Heart left ventricle (tissue), 16 donors: ENCODE measurements at regions of chr7 and their contacts with region 1.

Region 1: GRCh38 chr7:93890464-93891068 is at the start of gene TFPI2:
- DNase-seq: peak; percentile 25 to 59 (median 43)
- ATAC-seq: peak in 3 of 4 donors; percentile 61 to 69 (median 65)
- H3K4me3 ChIP-seq: peak within 1 kb of the TSS; percentile 50 to 72 (median 62)
- H3K27ac ChIP-seq: peak within 1 kb of the TSS in 7 of 12 donors; percentile 14 to 67 (median 36)
- H3K4me1 ChIP-seq: peaks cover 0 to 24% (median 8%) of the 10 kb centered on the region in 12 donors
- H3K27me3 ChIP-seq: peaks cover 0 to 32% (median 9%) of the 10 kb centered on the region in 9 donors
- CTCF ChIP-seq: peak in 1 of 12 donors; percentile 19
- POLR2A ChIP-seq: peak in 1 of 2 donors; percentile 35
- total RNA-seq, gene TFPI2: 0.92 to 26.8 (median 1.9) TPM

Region 2: GRCh38 chr7:93843260-93843659 is 47.3 kb before region 1 on chr7:
- intact Hi-C with region 1: no loop called
- DNase-seq: no peak
- ATAC-seq: no peak
- H3K4me3 ChIP-seq: no peak overlapping the region
- H3K27ac ChIP-seq: no peak overlapping the region
- H3K4me1 ChIP-seq: no peaks in the 10 kb centered on the region
- H3K27me3 ChIP-seq: no peaks in the 10 kb centered on the region
- CTCF ChIP-seq: no peak
- POLR2A ChIP-seq: no peak

Region 3: GRCh38 chr7:94129443-94130140 is 239.0 kb after region 1 on chr7:
- intact Hi-C with region 1: no loop called
- DNase-seq: no peak
- ATAC-seq: peak in 2 of 4 donors; percentile 41 to 74
- H3K4me3 ChIP-seq: no peak overlapping the region
- H3K27ac ChIP-seq: no peak overlapping the region
- H3K4me1 ChIP-seq: peaks cover 0 to 3% (median 0%) of the 10 kb centered on the region in 12 donors
- H3K27me3 ChIP-seq: no peaks in the 10 kb centered on the region
- CTCF ChIP-seq: no peak
- POLR2A ChIP-seq: no peak

Region 4: GRCh38 chr7:94170836-94171235 is 280.3 kb after region 1 on chr7:
- intact Hi-C with region 1: no loop called
- DNase-seq: no peak
- ATAC-seq: no peak
- H3K4me3 ChIP-seq: no peak overlapping the region
- H3K27ac ChIP-seq: peak overlapping the region in 2 of 12 donors; percentile 6 to 21
- H3K4me1 ChIP-seq: peaks cover 0 to 20% (median 0%) of the 10 kb centered on the region in 12 donors
- H3K27me3 ChIP-seq: no peaks in the 10 kb centered on the region
- CTCF ChIP-seq: no peak
- POLR2A ChIP-seq: no peak

Region 5: GRCh38 chr7:94183289-94183749 is 292.8 kb after region 1 on chr7:
- intact Hi-C with region 1: loop called in 1 of 10 experiments (anchors 10 kb)
- DNase-seq: peak in 4 of 5 donors; percentile 15 to 55 (median 30)
- ATAC-seq: peak; percentile 78 to 98 (median 93)
- H3K4me3 ChIP-seq: no peak overlapping the region
- H3K27ac ChIP-seq: peak overlapping the region; percentile 27 to 89 (median 73)
- H3K4me1 ChIP-seq: peaks cover 0 to 20% (median 7%) of the 10 kb centered on the region in 12 donors
- H3K27me3 ChIP-seq: no peaks in the 10 kb centered on the region
- CTCF ChIP-seq: no peak
- POLR2A ChIP-seq: no peak